Endothelial cell of umbilical vein (primary cell): ENCODE measurements at regions of chr20 and their contacts with region 1.

Region 1: GRCh38 chr20:40741507-40742106 is 52.6 kb upstream of the MAFB start:
- DNase-seq: peak; percentile 61
- H3K4me3 ChIP-seq: no peak overlapping the region
- H3K27ac ChIP-seq: no peak overlapping the region
- H3K4me1 ChIP-seq: no peaks in the 10 kb centered on the region
- H3K27me3 ChIP-seq: peaks cover 9 to 14% of the 10 kb centered on the region in 2 experiments
- CTCF ChIP-seq: peak; percentile 73 to 86
- POLR2A ChIP-seq: no peak

Region 2: GRCh38 chr20:40754339-40754943 is 12.8 kb after region 1 on chr20:
- CTCF ChIA-PET with region 1: interaction called, 47 read pairs
- POLR2A ChIA-PET with region 1: no interaction called
- dilution Hi-C with region 1: no loop called
- intact Hi-C with region 1: no loop called
- DNase-seq: peak; percentile 84
- H3K4me3 ChIP-seq: no peak overlapping the region
- H3K27ac ChIP-seq: no peak overlapping the region
- H3K4me1 ChIP-seq: peaks cover 22% of the 10 kb centered on the region
- H3K27me3 ChIP-seq: no peaks in the 10 kb centered on the region
- CTCF ChIP-seq: no peak
- POLR2A ChIP-seq: no peak

Region 3: GRCh38 chr20:40770564-40771307 is 29.1 kb after region 1 on chr20:
- CTCF ChIA-PET with region 1: interaction called, 11 read pairs
- POLR2A ChIA-PET with region 1: no interaction called
- dilution Hi-C with region 1: no loop called
- intact Hi-C with region 1: no loop called
- DNase-seq: no peak
- H3K4me3 ChIP-seq: no peak overlapping the region
- H3K27ac ChIP-seq: no peak overlapping the region
- H3K4me1 ChIP-seq: no peaks in the 10 kb centered on the region
- H3K27me3 ChIP-seq: peaks cover 0 to under 1% of the 10 kb centered on the region in 2 experiments
- CTCF ChIP-seq: no peak
- POLR2A ChIP-seq: no peak

Region 4: DNA sequence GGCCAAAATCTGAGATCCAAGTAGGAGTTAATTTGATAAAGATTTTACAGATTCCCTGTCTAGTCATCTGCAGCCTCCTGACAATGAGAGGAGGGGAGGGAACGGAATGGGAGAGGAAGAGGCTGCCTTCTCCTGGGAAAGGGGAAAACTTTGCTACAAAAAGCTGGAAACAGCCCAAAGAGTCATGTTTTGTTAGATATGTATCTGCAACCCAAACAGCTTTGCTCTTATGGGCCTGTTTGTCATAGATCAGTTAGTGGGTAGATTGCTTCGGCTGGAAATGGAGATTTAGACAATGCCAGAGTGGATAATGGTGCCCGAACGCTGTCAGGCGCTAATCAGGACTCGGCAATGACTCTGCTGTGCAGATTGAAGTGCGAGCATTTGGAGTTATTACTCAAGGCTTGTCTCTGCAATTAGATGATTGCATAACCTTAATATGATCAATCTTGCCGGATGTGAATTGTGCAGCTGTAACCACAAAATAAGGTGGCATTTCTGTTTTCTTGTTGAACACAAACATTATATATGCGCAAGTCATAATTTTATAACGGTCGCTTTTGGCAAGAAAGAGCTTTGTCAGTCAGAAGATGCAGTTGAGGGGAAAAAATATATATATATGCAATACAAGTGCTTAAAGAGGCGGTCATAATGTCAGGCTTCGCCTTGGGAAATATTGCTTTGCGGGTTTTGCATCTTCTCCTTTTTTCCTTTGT is 39.9 kb after region 1 on chr20:
- CTCF ChIA-PET with region 1: interaction called, 15 read pairs
- POLR2A ChIA-PET with region 1: no interaction called
- dilution Hi-C with region 1: no loop called
- intact Hi-C with region 1: no loop called
- DNase-seq: no peak
- H3K4me3 ChIP-seq: no peak overlapping the region
- H3K27ac ChIP-seq: no peak overlapping the region
- H3K4me1 ChIP-seq: no peaks in the 10 kb centered on the region
- H3K27me3 ChIP-seq: peaks cover 3 to 5% of the 10 kb centered on the region in 2 experiments
- CTCF ChIP-seq: no peak
- POLR2A ChIP-seq: no peak

Region 5: DNA sequence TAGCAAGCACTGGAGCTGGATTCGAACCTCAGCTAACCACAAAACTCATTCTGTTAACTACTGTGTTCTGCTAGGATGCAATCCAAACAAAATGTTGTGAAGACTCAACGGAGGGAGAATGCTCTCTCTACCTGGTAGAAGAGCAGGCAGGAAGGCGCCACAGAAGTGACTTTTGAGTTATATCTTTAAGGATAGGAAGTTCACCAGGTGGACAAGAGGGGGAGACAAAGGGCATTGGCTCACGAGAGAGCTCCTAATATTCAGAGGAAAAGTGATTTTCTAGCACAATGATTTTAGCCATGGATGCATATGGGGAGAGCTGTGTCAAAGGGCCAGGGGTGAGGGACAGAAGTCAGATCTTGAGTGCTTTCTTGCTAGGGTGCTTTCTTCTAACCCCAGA is 55.8 kb after region 1 on chr20:
- CTCF ChIA-PET with region 1: interaction called, 17 read pairs
- POLR2A ChIA-PET with region 1: no interaction called
- dilution Hi-C with region 1: no loop called
- intact Hi-C with region 1: loop called (anchors 5 kb)
- DNase-seq: no peak
- H3K4me3 ChIP-seq: no peak overlapping the region
- H3K27ac ChIP-seq: no peak overlapping the region
- H3K4me1 ChIP-seq: no peaks in the 10 kb centered on the region
- H3K27me3 ChIP-seq: peaks cover 2 to 5% of the 10 kb centered on the region in 2 experiments
- CTCF ChIP-seq: peak in 1 of 2 donors; percentile 33
- POLR2A ChIP-seq: no peak

Region 6: DNA sequence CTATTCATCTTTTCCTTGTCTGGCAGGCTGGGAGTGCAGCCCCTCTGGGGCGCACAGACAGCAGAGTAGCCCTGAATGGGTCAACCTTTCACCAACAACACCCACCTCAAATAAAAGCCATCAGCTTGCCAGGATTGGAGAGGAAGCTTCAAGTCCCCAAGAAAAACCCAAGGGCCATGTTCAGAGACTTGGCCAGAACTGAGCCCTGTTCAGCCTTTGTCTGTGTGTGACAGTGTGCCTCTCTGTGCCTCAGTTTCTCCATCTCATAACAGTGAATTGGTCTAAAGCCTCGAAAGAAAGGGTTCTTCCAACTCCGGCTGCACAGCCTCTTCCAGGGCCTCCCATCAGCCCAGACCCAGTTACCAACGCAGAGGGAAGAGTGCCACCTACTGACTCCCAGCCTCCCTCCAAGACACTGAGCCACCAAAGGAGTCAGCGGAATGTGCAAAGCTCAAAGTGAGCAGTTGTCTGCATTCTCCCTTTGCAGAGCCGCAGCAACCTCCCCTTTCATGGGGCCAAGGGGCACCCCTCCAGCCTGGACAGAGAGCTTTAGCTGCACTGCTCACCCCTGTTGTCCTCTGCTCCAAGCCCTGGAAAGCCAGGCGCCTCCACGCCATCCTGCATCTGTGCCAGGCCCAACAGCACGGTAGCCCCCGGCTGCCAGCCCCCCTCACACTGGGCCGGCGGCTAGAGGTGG is 204.3 kb after region 1 on chr20:
- CTCF ChIA-PET with region 1: interaction called, 112 read pairs
- POLR2A ChIA-PET with region 1: no interaction called
- dilution Hi-C with region 1: no loop called
- intact Hi-C with region 1: loop called (anchors 1 kb)
- DNase-seq: peak; percentile 56
- H3K4me3 ChIP-seq: no peak overlapping the region
- H3K27ac ChIP-seq: no peak overlapping the region
- H3K4me1 ChIP-seq: no peaks in the 10 kb centered on the region
- H3K27me3 ChIP-seq: no peaks in the 10 kb centered on the region
- CTCF ChIP-seq: peak; percentile 55 to 78
- POLR2A ChIP-seq: no peak